ENCODE measurements at regions of chr4 and their contacts with region 1.

Region 1: GRCh38 chr4:185304944-185305690 is 90.6 kb downstream of the LRP2BP start:
- DNase-seq: peak; percentile 59
- ATAC-seq: peak; percentile 44
- H3K4me3 ChIP-seq: peak overlapping the region; percentile 46
- H3K27ac ChIP-seq: peak overlapping the region; percentile 90
- H3K4me1 ChIP-seq: peaks cover 29% of the 10 kb centered on the region
- H3K27me3 ChIP-seq: no peaks in the 10 kb centered on the region
- CTCF ChIP-seq: peak; percentile 67

Region 2: DNA sequence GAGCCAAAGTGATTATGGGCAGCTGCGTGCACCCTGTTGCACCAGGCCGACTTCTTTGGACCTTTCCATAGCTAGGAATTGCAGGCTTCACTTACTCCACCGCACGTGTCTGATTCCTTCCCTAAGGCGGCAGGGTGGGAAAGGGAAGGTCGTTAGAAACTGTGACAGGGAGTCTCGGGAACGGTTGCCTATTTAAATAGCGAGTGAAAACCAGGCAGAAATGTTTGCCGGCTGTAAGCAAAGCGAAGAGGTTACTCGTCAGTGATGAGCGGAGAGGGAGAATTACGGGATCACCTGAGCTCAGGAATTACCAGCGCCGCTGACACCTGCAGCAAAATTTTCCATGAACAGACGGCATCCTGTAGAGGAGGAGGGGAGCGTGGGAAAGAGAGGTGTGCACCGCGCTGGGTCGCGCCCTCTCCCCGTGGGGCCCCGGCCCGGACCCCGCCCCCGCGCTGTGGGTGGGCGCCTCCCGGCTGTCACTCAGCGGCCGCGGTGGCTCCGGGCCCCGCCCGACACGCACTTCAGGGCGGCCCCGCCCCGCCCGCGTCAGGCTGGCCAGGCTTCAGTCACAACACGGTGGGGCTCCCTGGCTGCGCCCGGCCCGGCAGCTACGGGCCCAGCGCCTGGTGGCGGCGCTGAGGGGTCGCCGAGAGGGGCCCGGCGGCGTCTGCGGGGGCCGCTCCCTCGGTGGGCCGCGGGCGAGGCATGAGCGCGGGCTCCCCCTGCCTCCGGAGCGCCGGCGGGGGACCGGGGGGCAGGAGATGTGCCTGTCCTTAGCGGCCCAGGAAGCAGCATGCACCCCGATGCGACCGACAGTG is 95.9 kb before region 1 on chr4 and contains the start of gene SNX25:
- CTCF ChIA-PET with region 1: interaction called, 3 read pairs
- POLR2A ChIA-PET with region 1: no interaction called
- intact Hi-C with region 1: loop called (anchors 1 kb)
- DNase-seq: peak; percentile 80
- ATAC-seq: peak; percentile 83
- H3K4me3 ChIP-seq: peak within 1 kb of the TSS; percentile 95
- H3K27ac ChIP-seq: no peak within 1 kb of the TSS
- H3K4me1 ChIP-seq: peaks cover 22% of the 10 kb centered on the region
- H3K27me3 ChIP-seq: no peaks in the 10 kb centered on the region
- CTCF ChIP-seq: no peak
- total RNA-seq, gene SNX25: 8.4 and 9.2 TPM in 2 replicates

Region 3: DNA sequence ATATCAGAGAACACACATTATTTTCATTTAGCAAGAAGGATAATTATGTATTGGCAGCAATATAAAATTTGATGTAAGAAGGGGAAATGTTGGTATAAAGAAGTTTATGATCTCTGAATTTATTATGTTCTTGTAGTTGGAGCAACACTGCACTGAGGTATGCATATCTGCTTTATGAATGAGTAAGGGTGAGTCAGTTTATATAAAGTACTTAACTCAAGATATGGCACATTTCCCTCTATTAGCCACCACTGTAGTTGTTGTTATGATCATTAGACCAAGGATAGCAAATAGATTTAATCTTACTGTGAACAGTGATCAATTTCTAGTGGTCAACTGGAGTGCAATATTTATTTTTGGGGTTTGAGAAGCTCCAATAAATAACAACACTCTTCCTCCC is 29.1 kb before region 1 on chr4:
- CTCF ChIA-PET with region 1: no interaction called
- POLR2A ChIA-PET with region 1: no interaction called
- intact Hi-C with region 1: loop called (anchors 2 kb)
- DNase-seq: peak; percentile 58
- ATAC-seq: peak; percentile 93
- H3K4me3 ChIP-seq: no peak overlapping the region
- H3K27ac ChIP-seq: peak overlapping the region; percentile 28; the same call in 1 of the 2 replicates
- H3K4me1 ChIP-seq: peaks cover 30% of the 10 kb centered on the region
- H3K27me3 ChIP-seq: no peaks in the 10 kb centered on the region
- CTCF ChIP-seq: no peak

Region 4: DNA sequence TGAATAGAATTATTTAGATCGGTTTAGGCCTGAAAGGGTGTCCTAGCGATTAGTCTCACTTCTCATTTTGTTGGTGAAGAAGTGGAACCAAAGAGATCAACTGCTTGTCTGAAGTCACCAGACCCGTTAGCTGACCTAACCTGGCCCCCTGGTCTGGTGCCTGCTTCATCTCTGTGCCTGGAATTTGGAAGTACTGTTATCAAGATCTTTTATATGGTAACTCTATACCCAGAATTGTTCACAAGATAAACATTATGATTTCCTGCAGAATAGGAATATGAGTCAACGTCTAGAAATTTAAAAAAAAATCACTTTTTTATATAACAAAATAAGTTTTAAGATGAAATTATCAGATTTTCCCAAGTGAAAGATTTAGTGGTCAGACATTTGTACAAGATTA is 53.4 kb after region 1 on chr4:
- CTCF ChIA-PET with region 1: no interaction called
- POLR2A ChIA-PET with region 1: no interaction called
- intact Hi-C with region 1: loop called (anchors 1 kb)
- DNase-seq: peak; percentile 52
- ATAC-seq: peak; percentile 96
- H3K4me3 ChIP-seq: no peak overlapping the region
- H3K27ac ChIP-seq: no peak overlapping the region
- H3K4me1 ChIP-seq: peaks cover 22% of the 10 kb centered on the region
- H3K27me3 ChIP-seq: no peaks in the 10 kb centered on the region
- CTCF ChIP-seq: no peak

Measured in PC-3 (cell line).